AG04450 (cell line): ENCODE measurements at regions of chr7 and their contacts with region 1.

Region 1: DNA sequence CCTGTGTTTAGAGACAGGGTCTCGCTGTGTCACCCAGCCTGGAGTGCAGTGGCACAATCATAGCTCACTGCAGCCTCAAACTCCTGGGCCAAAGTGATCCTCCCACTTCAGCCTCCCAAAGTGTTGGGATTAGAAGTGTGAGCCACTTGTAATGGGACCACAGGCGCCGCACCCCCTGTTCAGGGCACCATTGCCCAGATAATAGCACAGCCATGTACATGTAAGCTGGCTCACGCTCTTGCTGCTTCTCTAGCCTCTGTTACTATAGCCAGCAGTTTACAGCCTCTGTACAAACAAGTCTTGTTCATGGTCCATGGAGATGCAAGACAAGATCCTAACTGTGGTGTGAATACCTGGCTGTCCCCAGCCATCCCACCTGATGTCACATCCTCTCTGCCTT is 4.2 kb upstream of the MLXIPL start:
- DNase-seq: no peak
- H3K4me3 ChIP-seq: no peak overlapping the region
- H3K27ac ChIP-seq: no peak overlapping the region
- H3K27me3 ChIP-seq: peaks cover 45% of the 10 kb centered on the region
- CTCF ChIP-seq: no peak

Region 2: DNA sequence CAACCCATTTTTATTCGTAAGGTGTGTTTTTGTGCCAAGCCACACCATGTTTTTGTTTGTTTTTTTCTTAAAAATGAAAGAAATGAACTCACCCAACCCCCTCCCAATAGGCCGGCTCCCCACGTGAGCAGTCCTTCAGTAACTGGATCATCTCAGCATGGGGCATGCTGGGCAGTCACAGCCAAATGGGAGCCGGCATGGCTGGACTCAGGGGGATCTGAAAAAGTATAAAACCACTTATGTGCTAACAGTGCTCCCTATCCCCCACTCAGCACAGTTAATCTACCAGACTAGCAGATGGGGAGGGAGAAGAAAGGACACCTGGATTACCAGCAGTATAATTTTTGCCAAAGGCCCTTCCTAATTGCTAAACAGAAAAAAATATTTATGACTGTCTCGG is 145.8 kb before region 1 on chr7:
- CTCF ChIA-PET with region 1: no interaction called
- POLR2A ChIA-PET with region 1: no interaction called
- DNase-seq: no peak
- H3K4me3 ChIP-seq: no peak overlapping the region
- H3K27ac ChIP-seq: no peak overlapping the region
- H3K27me3 ChIP-seq: no peaks in the 10 kb centered on the region
- CTCF ChIP-seq: no peak

Region 3: GRCh38 chr7:73726083-73726466 is 97.6 kb after region 1 on chr7:
- CTCF ChIA-PET with region 1: interaction called, 33 read pairs
- POLR2A ChIA-PET with region 1: no interaction called
- DNase-seq: no peak
- H3K4me3 ChIP-seq: no peak overlapping the region
- H3K27ac ChIP-seq: no peak overlapping the region
- H3K27me3 ChIP-seq: peaks cover 8% of the 10 kb centered on the region
- CTCF ChIP-seq: no peak